ENCODE measurements at regions of chrX and their contacts with region 1.

Region 1: GRCh38 chrX:43121637-43122036 is 343.7 kb upstream of the PPP1R2C start:
- DNase-seq: no peak
- ATAC-seq: no peak
- H3K4me3 ChIP-seq: no peak overlapping the region
- H3K27ac ChIP-seq: no peak overlapping the region
- H3K4me1 ChIP-seq: no peaks in the 10 kb centered on the region
- H3K27me3 ChIP-seq: no peaks in the 10 kb centered on the region
- CTCF ChIP-seq: no peak

Region 2: GRCh38 chrX:42176789-42177188 is 944.8 kb before region 1 on chrX:
- CTCF ChIA-PET with region 1: no interaction called
- POLR2A ChIA-PET with region 1: no interaction called
- in situ Hi-C with region 1: no loop called
- intact Hi-C with region 1: no loop called
- DNase-seq: no peak
- ATAC-seq: no peak
- H3K4me3 ChIP-seq: no peak overlapping the region
- H3K27ac ChIP-seq: no peak overlapping the region
- H3K4me1 ChIP-seq: no peaks in the 10 kb centered on the region
- H3K27me3 ChIP-seq: no peaks in the 10 kb centered on the region
- CTCF ChIP-seq: no peak

Region 3: GRCh38 chrX:43314525-43314924 is 192.9 kb after region 1 on chrX:
- CTCF ChIA-PET with region 1: interaction called, 11 read pairs
- POLR2A ChIA-PET with region 1: no interaction called
- in situ Hi-C with region 1: no loop called
- intact Hi-C with region 1: no loop called
- DNase-seq: no peak
- ATAC-seq: no peak
- H3K4me3 ChIP-seq: no peak overlapping the region
- H3K27ac ChIP-seq: no peak overlapping the region
- H3K4me1 ChIP-seq: no peaks in the 10 kb centered on the region
- H3K27me3 ChIP-seq: no peaks in the 10 kb centered on the region
- CTCF ChIP-seq: no peak